Breast epithelium (tissue), 4 donors: ENCODE measurements at regions of chr2 and their contacts with region 1.

Region 1: DNA sequence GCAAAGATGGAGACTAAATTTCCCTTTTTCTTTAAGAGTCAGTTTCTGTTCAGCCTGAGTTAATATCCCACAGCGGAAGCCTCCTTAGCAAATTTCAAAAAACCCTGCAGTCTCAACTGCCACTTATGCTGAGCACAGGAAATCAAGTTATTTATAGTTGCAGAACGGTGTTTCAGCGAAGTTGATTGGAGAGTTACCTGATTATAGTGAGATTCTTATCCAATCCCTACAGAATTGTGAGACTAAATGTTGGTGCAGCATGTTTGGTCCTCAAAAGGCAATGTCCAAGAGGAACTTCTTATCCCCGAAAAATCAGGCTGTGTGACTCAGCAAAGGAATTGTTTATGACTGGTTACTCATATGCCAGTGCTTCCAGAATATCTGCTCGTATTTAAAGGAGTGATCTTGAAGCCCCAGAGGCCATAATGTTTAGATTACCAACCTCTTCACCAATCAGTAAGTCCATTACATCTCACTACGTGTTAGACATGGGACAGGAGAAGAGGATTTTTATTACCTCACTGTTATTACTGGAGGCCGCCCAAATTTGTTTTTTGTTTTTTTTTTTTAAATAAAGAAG is 67.9 kb downstream of the LRRFIP1 start:
- DNase-seq: no peak
- H3K4me3 ChIP-seq: peak overlapping the region in 2 of 3 donors; percentile 20 to 98
- H3K27ac ChIP-seq: peak overlapping the region; percentile 94
- H3K4me1 ChIP-seq: peaks cover 3 to 16% of the 10 kb centered on the region in 2 donors
- H3K27me3 ChIP-seq: no peaks in the 10 kb centered on the region
- CTCF ChIP-seq: no peak
- POLR2A ChIP-seq: no peak

Region 2: DNA sequence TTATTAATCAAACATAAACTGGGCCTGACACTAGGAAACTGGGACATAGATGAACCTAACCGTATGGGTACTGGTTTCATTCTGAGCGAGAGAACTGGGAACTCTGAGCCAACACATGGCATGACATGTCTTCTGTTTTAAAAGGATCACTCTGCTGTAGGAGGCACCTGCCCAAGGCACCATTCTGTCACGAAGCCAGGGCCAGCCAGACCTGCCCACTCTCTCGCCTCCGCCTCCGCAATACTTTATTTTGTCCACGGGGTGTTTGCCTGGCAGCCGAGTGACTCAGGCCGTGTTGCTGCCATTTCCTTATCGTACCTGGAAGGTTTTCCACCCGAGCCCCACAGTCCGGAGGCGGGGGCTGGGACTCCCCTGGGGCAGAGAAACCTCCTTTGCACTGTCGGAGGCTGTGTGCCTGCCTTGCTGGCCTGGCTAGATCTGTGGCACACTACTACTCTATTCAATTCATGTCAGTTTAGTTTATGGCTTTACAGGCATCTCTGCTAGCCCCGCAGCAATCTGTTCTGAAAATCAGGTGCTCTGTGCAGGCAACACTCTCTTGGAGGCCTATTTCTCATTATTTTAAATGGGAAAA is 1246.0 kb before region 1 on chr2:
- intact Hi-C with region 1: no loop called
- DNase-seq: peak; percentile 67 to 73
- H3K4me3 ChIP-seq: peak overlapping the region in 2 of 3 donors; percentile 21 to 35
- H3K27ac ChIP-seq: peak overlapping the region; percentile 78 to 80
- H3K4me1 ChIP-seq: no peaks in the 10 kb centered on the region
- H3K27me3 ChIP-seq: no peaks in the 10 kb centered on the region
- CTCF ChIP-seq: no peak
- POLR2A ChIP-seq: no peak

Region 3: GRCh38 chr2:237731663-237732062 is 36.4 kb after region 1 on chr2:
- intact Hi-C with region 1: loop called (anchors 5 kb)
- DNase-seq: no peak
- H3K4me3 ChIP-seq: no peak overlapping the region
- H3K27ac ChIP-seq: peak overlapping the region; percentile 72 to 84
- H3K4me1 ChIP-seq: peaks cover 0 to 16% of the 10 kb centered on the region in 2 donors
- H3K27me3 ChIP-seq: no peaks in the 10 kb centered on the region
- CTCF ChIP-seq: no peak
- POLR2A ChIP-seq: no peak